Esophagus squamous epithelium (tissue), 5 donors: ENCODE measurements at regions of chr6 and their contacts with region 1.

Region 1: DNA sequence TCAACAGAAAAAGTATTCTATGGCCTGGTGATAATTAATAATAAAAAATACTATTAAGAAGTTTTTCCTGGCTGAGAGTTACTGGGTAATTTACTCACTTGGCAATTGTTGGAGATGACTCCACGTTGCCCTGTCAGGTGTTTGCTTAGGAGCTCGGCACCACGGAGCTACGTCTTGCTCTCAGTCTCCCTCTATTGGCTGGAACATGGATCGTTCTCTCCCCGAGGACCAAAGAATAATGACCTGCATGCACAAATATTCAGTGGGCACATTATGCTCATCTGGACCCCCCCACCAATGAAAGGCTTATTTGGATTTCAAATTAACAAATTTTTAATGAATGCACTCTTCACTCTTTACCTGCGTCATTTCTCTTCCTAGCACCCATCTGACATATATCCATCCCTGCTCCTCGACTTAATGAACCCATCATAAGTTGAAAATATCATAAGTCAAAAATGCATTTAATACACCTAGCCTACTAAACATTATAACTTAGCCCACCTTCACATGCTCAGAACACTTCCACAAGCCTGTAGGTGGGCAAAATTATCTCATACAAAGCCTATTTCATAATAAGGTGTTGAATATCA is 71.0 kb upstream of the CD83 start:
- DNase-seq: no peak
- H3K4me3 ChIP-seq: no peak overlapping the region
- H3K27ac ChIP-seq: no peak overlapping the region
- H3K4me1 ChIP-seq: peaks cover 0 to 3% (median 0%) of the 10 kb centered on the region in 3 donors
- H3K27me3 ChIP-seq: peaks cover 0 to 50% (median 0%) of the 10 kb centered on the region in 4 donors
- CTCF ChIP-seq: peak; percentile 14 to 72 (median 52)
- POLR2A ChIP-seq: no peak

Region 2: GRCh38 chr6:13795041-13795750 is 251.4 kb before region 1 on chr6:
- intact Hi-C with region 1: loop called (anchors 10 kb)
- DNase-seq: no peak
- H3K4me3 ChIP-seq: no peak overlapping the region
- H3K27ac ChIP-seq: peak overlapping the region in 3 of 4 donors; percentile 41 to 83 (median 69)
- H3K4me1 ChIP-seq: peaks cover 0 to 44% (median 5%) of the 10 kb centered on the region in 3 donors
- H3K27me3 ChIP-seq: no peaks in the 10 kb centered on the region
- CTCF ChIP-seq: peak; percentile 83 to 97 (median 93)
- POLR2A ChIP-seq: no peak

Region 3: DNA sequence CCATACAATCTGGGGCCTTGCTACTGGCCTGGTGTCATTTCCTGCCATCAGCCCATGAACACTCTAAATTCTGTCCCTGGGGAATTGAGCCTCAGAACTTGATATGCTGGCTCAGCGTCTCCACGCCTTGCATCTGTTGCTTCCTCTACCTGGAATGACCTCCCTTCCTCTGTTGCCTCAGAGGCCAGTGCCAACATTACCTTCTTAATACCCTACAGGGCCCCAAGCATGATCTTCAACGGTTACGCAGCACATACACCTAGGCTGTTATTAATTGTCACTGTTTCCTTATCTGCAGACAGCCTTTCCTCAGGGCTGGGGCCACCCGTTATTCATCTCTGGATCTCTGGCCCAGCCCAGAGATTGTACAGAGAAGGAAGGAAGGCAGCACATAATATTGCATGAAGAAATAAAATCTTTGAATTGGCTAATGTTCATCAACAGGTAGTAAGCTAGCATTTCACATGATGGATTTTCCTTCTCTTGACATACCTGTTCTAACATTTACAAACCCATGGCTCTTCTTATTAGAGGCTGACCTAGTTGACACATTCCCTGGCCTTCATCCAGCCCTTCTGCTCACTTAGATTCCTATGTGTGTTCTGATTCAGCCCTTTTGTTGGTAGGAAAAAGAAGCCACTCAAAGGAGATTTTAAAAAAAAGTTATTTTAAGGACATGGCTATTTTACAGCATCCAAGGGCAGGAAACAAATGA is 130.2 kb before region 1 on chr6:
- intact Hi-C with region 1: loop called (anchors 10 kb)
- DNase-seq: no peak
- H3K4me3 ChIP-seq: no peak overlapping the region
- H3K27ac ChIP-seq: peak overlapping the region in 2 of 4 donors; percentile 21
- H3K4me1 ChIP-seq: peaks cover 0 to 15% (median 0%) of the 10 kb centered on the region in 3 donors
- H3K27me3 ChIP-seq: peaks cover 0 to 57% (median 0%) of the 10 kb centered on the region in 4 donors
- CTCF ChIP-seq: no peak
- POLR2A ChIP-seq: no peak